Activated CD4-positive, alpha-beta T cell treated with anti-CD3 and anti-CD28 coated beads for 36 hours (primary cell): ENCODE measurements at regions of chr2 and their contacts with region 1.

Region 1: DNA sequence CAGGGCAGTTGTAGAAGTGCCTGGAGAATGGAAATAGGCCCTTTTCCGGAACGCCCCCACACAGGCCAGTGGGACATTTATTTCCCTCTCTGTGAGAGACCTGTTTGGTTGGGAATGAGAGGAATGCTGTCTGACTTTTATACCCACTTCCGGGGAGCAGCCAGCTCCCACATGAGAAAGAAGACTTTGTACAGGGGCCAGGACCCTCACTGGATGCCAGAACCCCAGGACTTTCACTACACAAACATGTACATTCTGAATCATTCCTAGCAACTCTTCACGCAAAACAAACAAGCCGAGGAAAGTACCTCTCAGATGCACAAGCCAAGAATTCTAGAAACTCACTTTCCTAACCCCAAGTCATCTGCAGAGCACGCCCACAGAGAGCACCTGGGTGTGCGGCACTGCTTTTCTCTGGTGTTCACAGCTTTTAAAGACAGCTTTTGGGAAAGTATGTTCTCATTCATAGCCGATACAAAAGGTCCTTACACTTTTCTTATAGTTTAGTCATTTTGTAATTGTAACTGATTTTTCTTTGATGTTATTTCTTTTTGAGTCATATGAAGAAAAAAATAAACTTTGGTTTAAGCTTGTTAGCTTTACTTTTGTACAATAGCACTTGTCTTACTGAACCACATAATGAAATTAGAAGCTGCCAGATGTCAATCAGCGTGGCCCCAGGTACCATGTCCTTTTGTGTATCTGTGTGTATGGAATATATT is 856.1 kb upstream of the ID2 start:
- DNase-seq: peak; percentile 86
- ATAC-seq: peak; percentile 95
- H3K4me3 Mint-ChIP-seq: peak overlapping the region; percentile 26
- H3K27ac Mint-ChIP-seq: peak overlapping the region; percentile 93
- H3K4me1 Mint-ChIP-seq: peaks cover 27% of the 10 kb centered on the region
- H3K27me3 Mint-ChIP-seq: peaks cover 3% of the 10 kb centered on the region

Region 2: GRCh38 chr2:7450188-7450832 is 375.4 kb before region 1 on chr2:
- CTCF ChIA-PET with region 1: no interaction called
- POLR2A ChIA-PET with region 1: no interaction called
- intact Hi-C with region 1: loop called in 1 of 2 experiments (anchors 1 kb)
- DNase-seq: peak; percentile 83
- ATAC-seq: peak; percentile 84
- H3K4me3 Mint-ChIP-seq: peak overlapping the region; percentile 36
- H3K27ac Mint-ChIP-seq: peak overlapping the region; percentile 89
- H3K4me1 Mint-ChIP-seq: peaks cover 74% of the 10 kb centered on the region
- H3K27me3 Mint-ChIP-seq: no peaks in the 10 kb centered on the region

Region 3: GRCh38 chr2:7588295-7588694 is 237.5 kb before region 1 on chr2:
- CTCF ChIA-PET with region 1: no interaction called
- POLR2A ChIA-PET with region 1: interaction called, 3 read pairs
- intact Hi-C with region 1: loop called in 1 of 2 experiments (anchors 10 kb)
- DNase-seq: no peak
- ATAC-seq: peak; percentile 71
- H3K4me3 Mint-ChIP-seq: no peak overlapping the region
- H3K27ac Mint-ChIP-seq: peak overlapping the region; percentile 71
- H3K4me1 Mint-ChIP-seq: peaks cover 41% of the 10 kb centered on the region
- H3K27me3 Mint-ChIP-seq: no peaks in the 10 kb centered on the region

Region 4: DNA sequence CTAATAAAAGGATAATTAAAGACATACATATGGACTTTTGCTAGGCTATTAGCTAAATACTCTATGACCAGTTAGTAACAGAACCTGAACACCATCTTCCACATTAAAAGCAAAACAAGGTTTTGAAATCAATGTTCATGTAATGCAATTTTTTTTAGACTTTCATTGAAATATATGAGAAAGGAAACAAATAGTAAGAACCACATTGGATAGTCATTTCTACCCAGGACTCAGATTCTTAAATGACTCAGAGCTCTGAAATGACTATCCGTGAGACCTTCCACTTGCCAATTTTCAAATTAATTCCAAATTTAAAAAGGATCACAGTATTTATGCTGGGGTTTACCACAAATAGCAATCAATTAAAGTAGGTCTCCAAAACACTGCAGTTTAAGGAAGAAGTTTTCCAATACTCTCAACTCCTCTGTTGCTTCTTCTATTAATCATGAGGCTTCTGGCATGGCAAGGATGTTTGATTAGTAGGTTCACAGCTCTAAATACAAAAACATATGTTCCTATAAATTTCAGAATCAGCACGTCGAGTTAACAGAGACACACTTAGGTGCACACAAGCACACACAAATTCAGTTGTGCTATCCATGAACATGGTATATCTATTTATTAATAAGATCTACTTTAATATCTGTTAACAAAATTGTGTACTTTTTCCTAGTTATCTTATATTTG is 67.5 kb before region 1 on chr2:
- CTCF ChIA-PET with region 1: interaction called, 3 read pairs
- POLR2A ChIA-PET with region 1: interaction called, 3 read pairs
- intact Hi-C with region 1: loop called (anchors 1 kb)
- DNase-seq: no peak
- ATAC-seq: peak; percentile 82
- H3K4me3 Mint-ChIP-seq: no peak overlapping the region
- H3K27ac Mint-ChIP-seq: peak overlapping the region; percentile 62
- H3K4me1 Mint-ChIP-seq: peaks cover 16% of the 10 kb centered on the region
- H3K27me3 Mint-ChIP-seq: peaks cover 14% of the 10 kb centered on the region

Region 5: DNA sequence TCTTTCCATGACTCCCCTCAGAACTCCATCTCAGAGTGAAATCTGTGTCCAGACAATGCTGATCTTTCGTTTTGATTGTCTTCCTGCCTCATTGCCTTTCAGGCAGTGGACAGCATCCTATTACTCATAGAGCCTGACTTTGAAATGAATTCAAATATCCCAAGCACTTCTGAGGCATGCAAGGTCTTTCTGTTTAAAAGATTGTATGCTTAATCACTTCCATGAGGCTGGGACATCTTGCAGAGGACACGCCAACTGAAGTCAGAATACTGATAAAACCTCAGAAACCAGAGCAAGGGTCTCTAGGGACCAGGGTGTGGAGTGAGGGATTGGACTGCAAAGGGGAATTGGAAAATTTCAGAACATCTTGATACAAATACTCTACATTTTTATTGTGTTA is 19.6 kb after region 1 on chr2:
- CTCF ChIA-PET with region 1: interaction called, 6 read pairs
- POLR2A ChIA-PET with region 1: interaction called, 14 read pairs
- intact Hi-C with region 1: loop called (anchors 1 kb)
- DNase-seq: no peak
- ATAC-seq: no peak
- H3K4me3 Mint-ChIP-seq: no peak overlapping the region
- H3K27ac Mint-ChIP-seq: no peak overlapping the region
- H3K4me1 Mint-ChIP-seq: peaks cover 40% of the 10 kb centered on the region
- H3K27me3 Mint-ChIP-seq: peaks cover 6% of the 10 kb centered on the region

Region 6: DNA sequence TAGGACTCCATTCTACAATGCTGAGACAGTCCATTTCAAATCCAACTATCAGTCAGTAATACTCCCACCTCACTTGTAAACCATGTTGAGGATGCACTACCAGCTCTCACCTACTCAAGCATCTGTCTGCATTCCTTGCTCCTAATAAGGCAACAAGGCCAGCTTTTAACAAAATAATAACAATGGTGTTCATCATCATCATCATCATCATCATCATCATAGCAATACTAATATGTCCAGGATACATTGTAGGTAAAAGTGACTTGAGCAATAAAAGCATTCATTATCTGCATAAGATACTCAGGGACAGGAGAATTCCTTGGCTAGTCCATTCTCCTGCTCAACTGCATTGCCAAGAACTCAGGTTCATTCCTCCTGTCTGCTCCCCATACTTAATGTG is 112.6 kb after region 1 on chr2:
- CTCF ChIA-PET with region 1: no interaction called
- POLR2A ChIA-PET with region 1: interaction called, 5 read pairs
- intact Hi-C with region 1: loop called in 1 of 2 experiments (anchors 2 kb)
- DNase-seq: no peak
- ATAC-seq: no peak
- H3K4me3 Mint-ChIP-seq: no peak overlapping the region
- H3K27ac Mint-ChIP-seq: peak overlapping the region; percentile 9
- H3K4me1 Mint-ChIP-seq: peaks cover 26% of the 10 kb centered on the region
- H3K27me3 Mint-ChIP-seq: peaks cover 7% of the 10 kb centered on the region

Region 7: DNA sequence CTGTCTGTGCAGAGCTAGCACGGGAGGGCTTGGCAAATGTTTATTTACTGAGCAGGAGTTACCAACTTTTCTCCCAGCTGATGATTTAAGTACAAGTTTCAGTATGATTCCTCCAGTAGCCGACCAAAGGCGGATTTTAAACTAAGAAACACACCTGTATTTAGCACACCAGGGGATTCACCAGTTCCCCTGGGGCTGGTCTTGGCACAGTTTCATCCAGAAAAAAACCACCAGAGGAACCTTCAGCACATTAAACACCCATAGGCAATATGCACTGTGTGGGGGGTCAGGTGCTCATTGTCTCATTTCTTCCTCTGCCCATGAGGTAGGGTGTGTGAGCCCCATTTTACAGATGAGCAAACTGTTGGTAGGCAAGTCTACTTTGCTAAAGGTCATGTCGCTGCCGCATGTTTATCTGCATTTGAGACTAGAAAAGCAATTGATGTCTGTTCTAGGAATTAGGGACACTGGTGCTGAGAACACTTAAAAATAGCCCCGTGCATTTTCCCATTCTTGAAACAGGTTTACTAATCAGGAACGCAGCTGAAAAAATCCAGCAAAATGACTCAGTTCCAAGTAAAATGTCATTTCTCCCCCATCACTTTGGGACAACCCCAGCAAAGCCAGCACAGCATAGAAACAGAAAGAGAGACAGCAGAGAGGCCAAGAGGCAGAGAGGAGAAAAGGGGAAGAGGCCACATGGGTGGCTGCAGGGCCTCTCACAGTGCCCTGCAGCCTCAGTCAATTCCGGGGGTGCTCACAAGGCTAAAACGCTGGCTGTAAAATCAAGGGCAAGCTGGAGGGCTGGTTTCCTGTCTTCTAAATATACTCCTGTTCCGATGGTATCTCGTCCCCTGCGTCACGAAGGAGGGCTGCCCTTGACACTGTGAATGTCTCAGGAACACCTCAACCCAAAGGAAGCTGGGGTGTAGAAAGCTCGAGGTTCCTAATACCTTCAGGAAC is 689.3 kb after region 1 on chr2:
- CTCF ChIA-PET with region 1: no interaction called
- POLR2A ChIA-PET with region 1: no interaction called
- intact Hi-C with region 1: loop called in 1 of 2 experiments (anchors 1 kb)
- DNase-seq: peak; percentile 82
- ATAC-seq: peak; percentile 86
- H3K4me3 Mint-ChIP-seq: peak overlapping the region; percentile 46
- H3K27ac Mint-ChIP-seq: peak overlapping the region; percentile 93
- H3K4me1 Mint-ChIP-seq: peaks cover 63% of the 10 kb centered on the region
- H3K27me3 Mint-ChIP-seq: no peaks in the 10 kb centered on the region